ENCODE measurements at regions of chr4 and their contacts with region 1.

Region 1: GRCh38 chr4:77854431-77855111 is 8.1 kb upstream of the MRPL1 start:
- DNase-seq: peak; percentile 87
- H3K4me3 ChIP-seq: peak overlapping the region in 1 of 3 experiments; percentile 24
- H3K27ac ChIP-seq: peak overlapping the region; percentile 89
- H3K4me1 ChIP-seq: peaks cover 27% of the 10 kb centered on the region
- H3K27me3 ChIP-seq: no peaks in the 10 kb centered on the region
- CTCF ChIP-seq: no peak
- POLR2A ChIP-seq: peak; percentile 62

Region 2: GRCh38 chr4:77927991-77928925 is 73.7 kb after region 1 on chr4:
- CTCF ChIA-PET with region 1: interaction called, 3 read pairs
- POLR2A ChIA-PET with region 1: no interaction called
- dilution Hi-C with region 1: no loop called
- intact Hi-C with region 1: loop called (anchors 1 kb)
- DNase-seq: peak; percentile 92
- H3K4me3 ChIP-seq: no peak overlapping the region
- H3K27ac ChIP-seq: peak overlapping the region; percentile 96
- H3K4me1 ChIP-seq: peaks cover 59% of the 10 kb centered on the region
- H3K27me3 ChIP-seq: no peaks in the 10 kb centered on the region
- CTCF ChIP-seq: no peak
- POLR2A ChIP-seq: no peak